HCT116 (cell line): ENCODE measurements at regions of chr7 and their contacts with region 1.

Region 1: GRCh38 chr7:85890244-85890811 is 703.5 kb upstream of the SEMA3D start:
- DNase-seq: peak; percentile 6
- ATAC-seq: peak; percentile 54; the same call in 1 of the 2 replicates
- H3K4me3 ChIP-seq: no peak overlapping the region
- H3K27ac ChIP-seq: no peak overlapping the region
- H3K4me1 ChIP-seq: no peaks in the 10 kb centered on the region
- H3K27me3 ChIP-seq: no peaks in the 10 kb centered on the region
- CTCF ChIP-seq: peak; percentile 38 to 62 (median 41); a peak in 5 of 6 replicates
- POLR2A ChIP-seq: no peak
- RAD21 ChIP-seq: peak; percentile 75

Region 2: DNA sequence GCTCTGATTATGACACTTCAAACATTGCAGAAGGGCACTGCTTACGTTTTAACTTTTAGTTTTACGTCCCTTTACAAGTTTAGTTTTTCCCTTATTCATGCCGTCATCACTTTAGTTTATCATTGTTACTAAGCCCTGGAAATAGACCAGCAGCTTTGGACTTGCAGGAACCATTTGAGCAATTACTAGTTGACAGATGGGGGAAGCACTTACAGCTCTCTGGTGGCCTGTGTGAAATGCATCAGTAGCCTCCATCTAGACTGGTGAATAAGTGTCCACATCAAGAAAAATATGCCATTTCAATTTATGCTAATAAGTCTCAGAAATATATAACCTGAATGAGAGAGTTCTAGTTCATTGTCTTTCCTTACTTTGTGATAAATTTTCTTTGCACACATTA is 558.5 kb after region 1 on chr7:
- CTCF ChIA-PET with region 1: no interaction called
- POLR2A ChIA-PET with region 1: no interaction called
- RAD21 ChIA-PET with region 1: no interaction called
- intact Hi-C with region 1: no loop called
- DNase-seq: no peak
- ATAC-seq: no peak
- H3K4me3 ChIP-seq: no peak overlapping the region
- H3K27ac ChIP-seq: no peak overlapping the region
- H3K4me1 ChIP-seq: no peaks in the 10 kb centered on the region
- H3K27me3 ChIP-seq: no peaks in the 10 kb centered on the region
- CTCF ChIP-seq: no peak
- POLR2A ChIP-seq: no peak
- RAD21 ChIP-seq: no peak

Region 3: GRCh38 chr7:86469680-86470295 is 579.5 kb after region 1 on chr7:
- CTCF ChIA-PET with region 1: interaction called, 23 read pairs
- POLR2A ChIA-PET with region 1: no interaction called
- RAD21 ChIA-PET with region 1: interaction called, 4 to 6 read pairs
- intact Hi-C with region 1: loop called (anchors 1 kb)
- DNase-seq: peak; percentile 78
- ATAC-seq: peak; percentile 94
- H3K4me3 ChIP-seq: no peak overlapping the region
- H3K27ac ChIP-seq: no peak overlapping the region
- H3K4me1 ChIP-seq: no peaks in the 10 kb centered on the region
- H3K27me3 ChIP-seq: no peaks in the 10 kb centered on the region
- CTCF ChIP-seq: peak; percentile 47 to 82 (median 70); a peak in 5 of 6 replicates
- POLR2A ChIP-seq: no peak
- RAD21 ChIP-seq: peak; percentile 85